ENCODE measurements at regions of chr2 and their contacts with region 1.

Region 1: DNA sequence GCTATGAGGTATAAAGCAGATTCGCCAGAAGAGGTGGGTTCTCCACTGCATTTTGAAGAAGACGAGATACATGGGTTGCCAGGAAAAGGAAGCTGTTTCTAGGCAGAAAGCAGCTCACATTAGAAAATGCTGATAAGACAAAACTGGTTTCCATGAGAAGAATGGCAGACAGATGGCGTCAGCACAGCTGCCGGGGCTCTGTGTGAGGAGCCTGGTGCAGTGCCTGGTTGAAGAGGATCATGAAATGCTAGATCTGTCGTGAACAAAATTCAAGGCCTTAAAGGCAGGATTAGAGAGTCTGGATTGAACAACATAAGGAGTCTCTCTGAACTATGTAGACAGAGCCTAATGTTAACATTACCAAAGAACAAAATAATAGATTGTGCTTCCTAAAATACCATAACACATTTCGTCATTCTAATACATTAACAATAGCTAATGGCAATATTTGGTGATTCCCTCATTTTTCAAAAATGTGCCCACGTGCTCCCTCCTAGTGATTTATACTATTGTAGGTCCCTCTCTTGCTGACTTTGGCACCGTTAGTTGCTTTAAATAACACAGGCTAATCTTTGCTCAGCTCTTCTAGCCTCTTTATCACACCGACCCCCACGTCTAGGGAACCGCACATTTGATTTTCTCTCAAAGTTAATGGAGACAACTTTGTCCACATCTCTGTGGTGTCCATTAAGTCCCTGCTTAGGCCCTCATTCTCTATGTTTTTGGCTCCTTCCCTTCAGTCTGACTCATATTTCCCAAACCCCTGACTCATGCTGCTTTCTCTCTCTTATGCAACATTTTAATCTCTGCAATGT is 38.2 kb downstream of the EFEMP1 start:
- DNase-seq: peak; percentile 82
- H3K4me3 ChIP-seq: no peak overlapping the region
- H3K27ac ChIP-seq: peak overlapping the region; percentile 55
- H3K4me1 ChIP-seq: peaks cover 50% of the 10 kb centered on the region
- H3K27me3 ChIP-seq: no peaks in the 10 kb centered on the region
- CTCF ChIP-seq: no peak

Region 2: GRCh38 chr2:55976681-55977080 is 91.3 kb after region 1 on chr2:
- CTCF ChIA-PET with region 1: no interaction called
- POLR2A ChIA-PET with region 1: interaction called, 10 read pairs
- intact Hi-C with region 1: no loop called
- DNase-seq: no peak
- H3K4me3 ChIP-seq: no peak overlapping the region
- H3K27ac ChIP-seq: no peak overlapping the region
- H3K4me1 ChIP-seq: no peaks in the 10 kb centered on the region
- H3K27me3 ChIP-seq: peaks cover 22% of the 10 kb centered on the region
- CTCF ChIP-seq: no peak

Region 3: GRCh38 chr2:57453945-57454344 is 1568.6 kb after region 1 on chr2:
- CTCF ChIA-PET with region 1: no interaction called
- POLR2A ChIA-PET with region 1: interaction called, 22 read pairs
- intact Hi-C with region 1: no loop called
- DNase-seq: peak; percentile 18
- H3K4me3 ChIP-seq: no peak overlapping the region
- H3K27ac ChIP-seq: no peak overlapping the region
- H3K4me1 ChIP-seq: no peaks in the 10 kb centered on the region
- H3K27me3 ChIP-seq: no peaks in the 10 kb centered on the region
- CTCF ChIP-seq: peak; percentile 53

Measured in A673 (cell line).